Upper lobe of right lung (tissue), 1 donor: ENCODE measurements at regions of chr17 and their contacts with region 1.

Region 1: GRCh38 chr17:56367366-56367765 is 214.1 kb downstream of the ANKFN1 start:
- DNase-seq: no peak
- ATAC-seq: no peak
- H3K4me3 ChIP-seq: no peak overlapping the region
- H3K27ac ChIP-seq: no peak overlapping the region
- H3K4me1 ChIP-seq: no peaks in the 10 kb centered on the region
- H3K27me3 ChIP-seq: no peaks in the 10 kb centered on the region
- CTCF ChIP-seq: no peak

Region 2: GRCh38 chr17:56441331-56441730 is 74.0 kb after region 1 on chr17:
- intact Hi-C with region 1: no loop called
- DNase-seq: no peak
- ATAC-seq: no peak
- H3K4me3 ChIP-seq: no peak overlapping the region
- H3K27ac ChIP-seq: no peak overlapping the region
- H3K4me1 ChIP-seq: no peaks in the 10 kb centered on the region
- H3K27me3 ChIP-seq: no peaks in the 10 kb centered on the region
- CTCF ChIP-seq: no peak

Region 3: DNA sequence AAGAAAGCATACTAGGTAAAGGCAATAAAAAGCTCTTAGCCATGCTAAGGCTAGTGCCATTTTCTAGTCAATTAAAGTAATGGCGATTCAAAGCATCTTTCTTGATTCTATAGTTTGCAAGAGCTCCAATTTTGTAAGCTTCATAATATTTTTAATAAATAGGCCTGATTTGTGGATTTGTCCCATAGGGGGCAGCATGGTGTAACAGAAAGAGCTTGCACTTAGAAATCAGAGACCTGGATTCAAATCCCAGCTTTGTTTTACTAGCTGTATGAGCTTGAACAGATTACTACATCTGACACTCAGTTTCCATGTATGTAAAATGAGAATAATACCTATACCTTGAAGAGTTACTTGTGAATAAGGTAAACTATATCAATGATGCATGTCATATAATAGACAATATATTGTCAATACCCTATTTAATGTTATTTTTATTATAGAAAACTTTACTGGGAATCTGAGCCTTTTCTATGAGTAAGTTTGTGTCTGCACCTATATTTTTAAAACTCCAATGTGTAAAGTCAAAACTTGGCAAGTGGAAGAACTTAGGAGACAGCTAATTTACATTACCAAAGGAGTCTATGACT is 132.5 kb after region 1 on chr17:
- intact Hi-C with region 1: no loop called
- DNase-seq: no peak
- ATAC-seq: peak; percentile 41
- H3K4me3 ChIP-seq: no peak overlapping the region
- H3K27ac ChIP-seq: no peak overlapping the region
- H3K4me1 ChIP-seq: no peaks in the 10 kb centered on the region
- H3K27me3 ChIP-seq: no peaks in the 10 kb centered on the region
- CTCF ChIP-seq: peak; percentile 44

Region 4: GRCh38 chr17:57045868-57046704 is 678.7 kb after region 1 on chr17:
- intact Hi-C with region 1: loop called (anchors 10 kb)
- DNase-seq: peak; percentile 83
- ATAC-seq: peak; percentile 89
- H3K4me3 ChIP-seq: peak overlapping the region; percentile 34
- H3K27ac ChIP-seq: no peak overlapping the region
- H3K4me1 ChIP-seq: peaks cover 4% of the 10 kb centered on the region
- H3K27me3 ChIP-seq: peaks cover 16% of the 10 kb centered on the region
- CTCF ChIP-seq: no peak